PC-3 (cell line): ENCODE measurements at regions of chr17 and their contacts with region 1.

Region 1: GRCh38 chr17:700504-701094 is 14.0 kb downstream of the VPS53 start:
- DNase-seq: peak; percentile 35
- ATAC-seq: 0 out of 2 replicates have a peak, but pooled peaks have one; percentile 35
- H3K4me3 ChIP-seq: no peak overlapping the region
- H3K27ac ChIP-seq: no peak overlapping the region
- H3K4me1 ChIP-seq: peaks cover 13% of the 10 kb centered on the region
- H3K27me3 ChIP-seq: no peaks in the 10 kb centered on the region
- CTCF ChIP-seq: peak; percentile 66

Region 2: GRCh38 chr17:409848-410545 is 290.6 kb before region 1 on chr17:
- CTCF ChIA-PET with region 1: interaction called, 32 read pairs
- POLR2A ChIA-PET with region 1: no interaction called
- intact Hi-C with region 1: loop called (anchors 2 kb)
- DNase-seq: peak; percentile 99
- ATAC-seq: peak; percentile 86
- H3K4me3 ChIP-seq: peak overlapping the region; percentile 88
- H3K27ac ChIP-seq: peak overlapping the region; percentile 25; the same call in 1 of the 2 replicates
- H3K4me1 ChIP-seq: peaks cover 4% of the 10 kb centered on the region; the same call in 1 of the 2 replicates
- H3K27me3 ChIP-seq: no peaks in the 10 kb centered on the region
- CTCF ChIP-seq: no peak